ENCODE measurements at regions of chr11 and their contacts with region 1.

Region 1: DNA sequence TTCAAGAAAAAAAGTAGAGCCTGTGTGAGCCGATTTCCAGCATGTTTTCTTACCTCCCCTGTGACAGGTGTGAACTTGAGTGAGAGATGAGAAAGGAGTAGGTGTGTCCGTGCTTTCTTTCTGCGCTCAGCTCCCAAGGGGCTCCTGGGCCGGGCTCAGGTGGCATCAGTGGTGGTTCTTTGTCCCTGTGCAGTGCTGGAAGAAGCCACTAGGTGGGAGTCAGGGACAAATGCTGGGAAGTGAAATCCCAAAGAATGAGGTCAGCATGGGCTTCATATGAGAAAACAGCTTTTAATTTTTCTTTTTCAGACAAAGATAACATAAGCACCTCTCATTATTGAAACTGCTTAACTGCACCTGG is 57.8 kb downstream of the PPFIBP2 start:
- DNase-seq: peak; percentile 74

Region 2: GRCh38 chr11:7582338-7582985 is 10.8 kb after region 1 on chr11:
- CTCF ChIA-PET with region 1: interaction called, 15 read pairs
- POLR2A ChIA-PET with region 1: no interaction called
- DNase-seq: no peak

Region 3: DNA sequence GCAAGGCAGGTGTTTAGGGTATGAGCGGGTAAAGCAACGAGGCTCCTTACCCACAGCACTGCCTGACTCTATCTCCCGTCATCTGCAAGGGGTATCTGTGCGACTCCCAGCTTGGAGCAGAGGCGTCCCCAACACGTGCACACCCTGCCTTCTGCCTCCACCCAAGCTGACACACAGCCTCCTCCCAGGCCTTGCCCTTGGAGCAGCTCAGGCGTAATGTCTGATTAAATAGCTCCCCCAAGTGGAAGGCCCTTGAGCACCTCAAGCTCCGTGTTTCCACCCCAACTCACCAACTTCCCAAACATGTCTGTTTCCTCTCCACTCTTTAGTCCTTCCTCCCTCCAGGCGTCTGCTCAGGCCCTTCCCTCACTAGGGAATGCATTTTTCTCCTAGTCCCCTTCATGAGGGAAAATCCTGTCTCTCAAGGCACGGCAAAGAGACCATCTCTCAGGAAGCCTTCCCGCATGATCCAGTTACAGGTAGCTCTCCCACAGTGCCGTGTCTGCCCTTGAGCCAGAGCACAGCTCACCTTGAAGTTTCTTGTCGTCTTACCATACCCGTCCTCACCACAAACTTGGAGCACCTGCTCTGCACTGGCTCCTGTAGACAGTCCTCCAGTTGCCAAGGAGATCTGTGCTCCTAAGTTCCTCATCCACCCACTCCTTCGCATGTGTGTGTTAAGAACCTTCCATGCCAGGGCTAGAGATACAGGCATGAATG is 85.8 kb after region 1 on chr11:
- CTCF ChIA-PET with region 1: interaction called, 24 read pairs
- POLR2A ChIA-PET with region 1: interaction called, 3 read pairs
- DNase-seq: peak; percentile 59

Region 4: DNA sequence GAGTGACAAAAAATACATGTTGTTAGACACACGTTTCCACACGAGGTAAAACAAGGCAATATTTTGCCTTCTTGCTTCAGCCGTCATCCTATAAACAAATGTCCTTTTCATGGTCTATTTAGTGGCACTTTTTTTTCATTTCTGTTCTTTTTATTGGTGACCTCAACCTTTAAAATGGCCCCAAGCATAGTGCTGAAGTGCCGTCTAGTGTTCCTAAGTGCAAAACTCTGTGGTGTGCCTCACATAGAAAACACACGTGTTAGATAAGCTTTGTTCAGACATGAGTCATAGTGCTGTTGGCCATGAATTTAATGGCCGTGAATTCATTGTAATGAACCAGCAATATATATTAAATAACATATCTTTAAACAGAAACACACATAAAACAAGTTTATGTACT is 119.0 kb after region 1 on chr11:
- CTCF ChIA-PET with region 1: interaction called, 17 read pairs
- POLR2A ChIA-PET with region 1: no interaction called
- DNase-seq: peak; percentile 35

Measured in HEK293T (cell line).